ENCODE measurements at regions of chr12 and their contacts with region 1.

Region 1: DNA sequence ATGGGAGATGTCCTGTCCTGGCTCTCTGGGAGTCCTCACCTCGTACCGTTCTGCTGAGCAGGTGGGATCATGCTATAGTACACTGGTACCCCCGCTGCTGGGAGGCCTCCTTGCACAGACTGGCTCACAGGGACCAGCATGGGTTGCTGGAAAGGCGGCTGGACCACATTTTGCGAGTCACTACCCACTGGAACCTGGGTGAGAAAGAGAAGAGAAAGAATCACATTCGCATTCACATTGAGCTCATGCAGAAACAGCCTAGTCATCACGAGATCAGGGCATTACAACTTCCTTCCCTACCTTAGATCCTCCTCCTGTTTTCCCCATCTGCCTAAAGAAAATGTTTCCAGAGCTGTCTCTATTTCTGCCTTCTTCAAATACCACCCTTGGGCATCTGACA is 17.3 kb upstream of the STAC3 start:
- DNase-seq: no peak
- ATAC-seq: no peak
- H3K4me3 Mint-ChIP-seq: no peak overlapping the region
- H3K27ac Mint-ChIP-seq: no peak overlapping the region
- H3K4me1 Mint-ChIP-seq: no peaks in the 10 kb centered on the region
- H3K27me3 Mint-ChIP-seq: no peaks in the 10 kb centered on the region
- CTCF ChIP-seq: no peak

Region 2: DNA sequence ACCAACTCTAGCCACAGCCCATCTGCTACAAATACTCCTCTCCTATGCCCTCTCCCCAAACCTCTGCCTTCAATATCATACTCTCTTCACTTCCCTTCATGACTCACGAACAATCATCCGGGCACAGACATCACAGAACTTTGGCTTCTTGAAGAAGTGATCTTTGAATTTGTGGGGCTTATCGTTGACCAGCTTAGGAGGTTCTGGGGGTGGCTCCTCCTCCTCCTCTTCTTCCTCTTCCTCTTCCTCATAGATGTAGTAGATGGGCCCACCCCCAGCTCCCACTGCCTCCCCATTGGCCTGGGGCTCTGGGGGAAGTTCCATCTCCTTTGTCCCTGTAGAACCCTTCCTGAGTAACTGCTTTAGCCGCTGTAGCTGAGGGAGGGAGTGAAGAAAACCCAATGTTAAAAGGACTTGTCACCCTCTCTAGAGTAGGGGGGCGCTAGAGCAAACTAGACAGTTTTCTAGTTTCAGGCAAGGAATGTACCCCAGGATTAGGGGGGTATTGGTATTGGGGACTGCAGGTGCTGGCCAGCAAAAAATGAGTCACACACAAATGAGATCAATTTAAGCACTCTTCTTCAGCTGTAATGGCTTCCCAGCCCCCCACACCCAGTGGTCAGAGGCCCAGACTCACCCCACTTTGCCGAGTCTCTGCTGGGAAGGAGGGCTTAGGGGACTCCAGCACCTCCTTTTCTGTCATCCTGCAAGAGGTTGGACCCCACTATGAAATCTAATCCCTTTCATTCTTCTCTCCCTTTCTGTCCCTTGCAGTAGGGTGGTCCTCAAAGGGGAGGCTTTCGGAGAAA is 19.1 kb before region 1 on chr12:
- CTCF ChIA-PET with region 1: interaction called, 17 read pairs
- POLR2A ChIA-PET with region 1: interaction called, 3 read pairs
- DNase-seq: peak; percentile 7
- ATAC-seq: peak; percentile 6; the same call in 1 of the 2 replicates
- H3K4me3 Mint-ChIP-seq: no peak overlapping the region
- H3K27ac Mint-ChIP-seq: peak overlapping the region; percentile 11; the same call in 1 of the 2 replicates
- H3K4me1 Mint-ChIP-seq: peaks cover 50% of the 10 kb centered on the region
- H3K27me3 Mint-ChIP-seq: peaks cover 10% of the 10 kb centered on the region
- CTCF ChIP-seq: no peak